Activated CD4-positive, alpha-beta T cell treated with anti-CD3 and anti-CD28 coated beads, Interleukin-2, amount 10 ng/mL, durations not matched to agents 7 days and 5 days (primary cell): ENCODE measurements at regions of chr16 and their contacts with region 1.

Region 1: GRCh38 chr16:22206013-22206841 is at the start of gene EEF2K:
- DNase-seq: peak; percentile 83
- H3K4me3 Mint-ChIP-seq: peak within 1 kb of the TSS; percentile 93
- H3K27ac Mint-ChIP-seq: peak within 1 kb of the TSS; percentile 83
- H3K4me1 Mint-ChIP-seq: peaks cover 33% of the 10 kb centered on the region
- H3K27me3 Mint-ChIP-seq: no peaks in the 10 kb centered on the region
- total RNA-seq, gene EEF2K: 21.9 to 23.8 TPM

Region 2: DNA sequence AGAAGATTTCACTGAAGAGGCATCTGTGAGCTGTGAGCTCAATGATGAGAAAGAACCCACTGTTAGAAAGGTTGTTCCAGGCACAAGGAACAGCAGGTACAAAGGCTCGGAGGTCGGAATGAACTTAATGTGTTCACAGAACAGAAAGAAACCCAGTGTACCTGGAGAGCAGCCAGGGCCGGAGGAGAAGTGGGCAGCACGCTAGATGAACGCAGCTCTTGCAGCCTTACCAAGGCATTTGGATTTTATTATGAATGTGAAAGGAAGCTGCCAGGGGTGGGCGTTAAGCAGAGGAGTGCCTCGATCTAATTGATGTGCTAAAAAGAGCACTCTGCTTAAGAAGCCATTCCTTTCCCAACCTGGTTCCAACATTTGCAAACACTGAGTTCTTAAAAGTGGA is 18.8 kb after region 1 on chr16:
- CTCF ChIA-PET with region 1: interaction called, 13 read pairs
- POLR2A ChIA-PET with region 1: no interaction called
- DNase-seq: no peak
- H3K4me3 Mint-ChIP-seq: no peak overlapping the region
- H3K27ac Mint-ChIP-seq: no peak overlapping the region
- H3K4me1 Mint-ChIP-seq: no peaks in the 10 kb centered on the region
- H3K27me3 Mint-ChIP-seq: no peaks in the 10 kb centered on the region

Region 3: DNA sequence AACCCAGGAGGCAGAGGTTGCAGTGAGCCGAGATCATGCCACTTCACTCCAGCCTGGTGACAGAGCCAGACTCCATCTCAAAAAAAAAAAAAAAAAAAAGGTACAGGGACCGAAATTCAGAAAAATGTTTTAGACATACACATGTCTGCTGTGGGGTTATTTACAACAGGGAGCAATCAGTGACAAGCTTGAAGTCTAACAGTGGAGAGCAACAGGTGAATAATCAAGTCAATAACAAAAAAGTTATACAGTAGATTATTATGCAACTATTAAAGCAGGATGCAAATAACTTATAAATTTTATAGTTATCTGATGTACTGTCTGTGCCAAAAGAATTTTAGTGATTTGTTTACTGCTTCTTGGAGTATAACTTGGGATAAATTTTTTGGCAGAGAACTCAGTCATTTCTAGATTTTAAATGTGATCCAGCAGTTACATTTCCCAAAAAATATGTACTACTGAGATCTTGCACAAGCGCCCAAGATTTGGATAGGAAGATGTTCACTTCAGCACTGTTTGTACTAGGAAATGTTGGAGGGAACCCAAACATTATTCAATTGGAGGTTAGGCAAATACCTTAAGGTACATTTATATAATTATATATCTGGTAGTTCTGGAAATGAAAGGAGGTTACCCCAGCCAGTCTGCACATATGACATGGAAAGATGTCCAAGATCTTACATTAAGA is 33.9 kb after region 1 on chr16:
- CTCF ChIA-PET with region 1: no interaction called
- POLR2A ChIA-PET with region 1: no interaction called
- DNase-seq: no peak
- H3K4me3 Mint-ChIP-seq: no peak overlapping the region
- H3K27ac Mint-ChIP-seq: peak overlapping the region; percentile 96
- H3K4me1 Mint-ChIP-seq: peaks cover 36% of the 10 kb centered on the region
- H3K27me3 Mint-ChIP-seq: no peaks in the 10 kb centered on the region